K562 (cell line): ENCODE measurements at regions of chr19 and their contacts with region 1.

Region 1: DNA sequence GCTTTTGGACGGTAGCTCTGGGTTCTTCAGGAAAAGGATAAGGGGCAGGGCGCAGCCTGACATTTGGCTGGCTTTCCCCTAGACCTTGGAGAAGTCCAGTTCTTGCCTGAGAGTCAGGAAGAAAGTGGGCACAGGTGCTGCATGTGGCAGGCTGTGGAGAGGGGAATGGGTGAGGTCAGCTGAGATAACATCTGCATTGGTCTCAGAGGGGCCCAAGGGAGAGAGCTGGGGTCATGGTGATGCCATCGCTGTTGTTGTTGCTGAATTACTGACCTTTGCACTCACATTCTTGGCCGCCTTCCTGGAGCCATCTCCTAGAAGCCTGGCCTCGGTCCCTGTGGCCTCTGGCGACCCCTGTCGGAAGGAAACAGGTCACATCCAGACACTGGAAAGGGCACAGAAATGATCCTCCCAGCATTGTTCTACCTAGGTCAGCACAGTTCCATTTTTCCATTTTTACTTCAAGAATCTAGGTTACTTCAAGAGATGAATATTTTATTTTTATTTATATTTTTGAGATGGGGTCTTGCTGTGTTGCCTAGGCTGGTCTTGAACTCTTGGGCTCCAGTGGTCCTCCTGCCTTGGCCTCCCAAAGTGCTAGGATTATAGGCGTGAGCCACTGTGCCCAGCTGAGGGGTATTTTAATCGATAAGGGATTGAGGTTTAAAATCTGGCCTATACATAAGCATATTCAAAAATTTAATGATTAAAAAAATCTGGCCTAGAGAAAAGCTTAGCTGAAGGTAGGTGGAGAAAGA is 6.5 kb upstream of the LIPE start:
- DNase-seq: peak; percentile 61 to 88 (median 71)
- ATAC-seq: peak; percentile 98
- H3K4me3 ChIP-seq: no peak overlapping the region
- H3K27ac ChIP-seq: no peak overlapping the region
- H3K4me1 ChIP-seq: peaks cover 0 to 9% of the 10 kb centered on the region in 2 experiments; a peak in 2 of 5 replicates
- H3K27me3 ChIP-seq: no peaks in the 10 kb centered on the region
- CTCF ChIP-seq: peak; percentile 94 to 98 (median 95)
- EP300 ChIP-seq: no peak
- POLR2A ChIP-seq: no peak
- RAD21 ChIP-seq: peak; percentile 80 to 94

Region 2: GRCh38 chr19:42325273-42325895 is 108.3 kb before region 1 on chr19 and contains the start of gene MEGF8:
- CTCF ChIA-PET with region 1: no interaction called
- POLR2A ChIA-PET with region 1: no interaction called
- in situ Hi-C with region 1: no loop called
- intact Hi-C with region 1: loop called (anchors 10 kb)
- DNase-seq: peak; percentile 97 to 99 (median 98)
- ATAC-seq: peak; percentile 98
- H3K4me3 ChIP-seq: peak within 1 kb of the TSS; percentile 99
- H3K27ac ChIP-seq: peak within 1 kb of the TSS; percentile 72
- H3K4me1 ChIP-seq: peaks cover 8 to 27% of the 10 kb centered on the region in 2 experiments; a peak in 4 of 5 replicates
- H3K27me3 ChIP-seq: no peaks in the 10 kb centered on the region
- CTCF ChIP-seq: peak; percentile 91 to 96 (median 94)
- EP300 ChIP-seq: no peak
- POLR2A ChIP-seq: peak; percentile 79
- RAD21 ChIP-seq: peak; percentile 73 to 82
- polyA plus RNA-seq, gene MEGF8: 0.28 to 0.34 TPM

Region 3: DNA sequence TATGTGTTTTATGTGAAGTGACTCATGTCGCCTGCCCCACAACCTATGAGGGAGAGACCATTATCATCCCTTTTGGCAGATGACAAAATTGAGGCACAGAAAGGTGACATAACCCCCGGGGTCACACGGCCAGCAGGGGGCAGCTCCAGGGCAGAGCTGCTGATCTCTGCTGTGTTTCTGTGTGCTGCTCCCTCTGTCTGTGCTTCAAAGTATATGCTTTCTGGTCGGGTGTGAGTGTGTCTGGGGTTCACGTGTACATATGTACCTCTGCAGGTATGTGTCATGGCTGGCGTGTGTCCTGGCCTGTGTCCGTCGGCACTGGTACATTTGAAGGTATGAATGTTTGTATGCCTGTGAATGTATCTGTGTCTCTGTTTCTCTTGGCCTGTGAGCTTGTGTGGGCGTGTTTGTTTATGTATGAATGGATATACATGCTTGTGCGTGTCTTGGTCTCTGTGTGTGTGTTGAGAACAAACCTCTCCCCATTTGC is 13.6 kb before region 1 on chr19:
- CTCF ChIA-PET with region 1: interaction called, 6 read pairs
- POLR2A ChIA-PET with region 1: no interaction called
- in situ Hi-C with region 1: no loop called
- intact Hi-C with region 1: loop called (anchors 1 kb)
- DNase-seq: peak; percentile 82 to 90 (median 89)
- ATAC-seq: peak; percentile 96
- H3K4me3 ChIP-seq: no peak overlapping the region
- H3K27ac ChIP-seq: no peak overlapping the region
- H3K4me1 ChIP-seq: peaks cover 0 to 25% of the 10 kb centered on the region in 2 experiments; a peak in 2 of 5 replicates
- H3K27me3 ChIP-seq: peaks cover 0 to 4% of the 10 kb centered on the region in 2 experiments; a peak in 1 of 5 replicates
- CTCF ChIP-seq: peak; percentile 97 to 100 (median 99)
- EP300 ChIP-seq: no peak
- POLR2A ChIP-seq: no peak
- RAD21 ChIP-seq: peak; percentile 24 to 75; a peak in 2 of 4 replicates

Region 4: DNA sequence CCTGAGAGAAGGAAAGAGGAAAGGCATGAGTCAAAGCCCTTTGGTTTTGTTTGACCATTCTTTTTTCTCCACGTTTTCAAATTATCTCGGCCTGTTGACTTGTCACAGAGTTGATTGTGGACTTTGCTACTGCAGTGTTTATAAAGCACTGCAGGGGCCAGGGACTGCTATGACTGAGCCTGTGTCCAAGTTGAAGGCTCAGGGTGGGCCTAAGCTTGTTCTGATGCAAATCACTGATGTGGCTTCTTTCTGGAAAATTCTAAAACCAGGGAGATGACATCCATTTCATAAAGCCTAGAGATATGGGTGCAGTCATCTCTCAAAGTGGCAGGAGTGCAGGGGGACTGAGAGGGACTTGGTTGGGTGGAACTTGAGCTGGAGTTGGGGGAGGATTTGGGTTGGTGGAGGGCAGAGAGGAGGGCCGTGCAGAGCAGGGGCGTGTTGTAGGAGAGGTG is 10.3 kb after region 1 on chr19:
- CTCF ChIA-PET with region 1: no interaction called
- POLR2A ChIA-PET with region 1: no interaction called
- in situ Hi-C with region 1: no loop called
- intact Hi-C with region 1: no loop called
- DNase-seq: no peak
- ATAC-seq: no peak
- H3K4me3 ChIP-seq: no peak overlapping the region
- H3K27ac ChIP-seq: no peak overlapping the region
- H3K4me1 ChIP-seq: no peaks in the 10 kb centered on the region; a peak in 1 of 5 replicates
- H3K27me3 ChIP-seq: no peaks in the 10 kb centered on the region; a peak in 1 of 5 replicates
- CTCF ChIP-seq: no peak
- EP300 ChIP-seq: no peak
- POLR2A ChIP-seq: no peak
- RAD21 ChIP-seq: no peak

Region 5: GRCh38 chr19:42606660-42607351 is 173.1 kb after region 1 on chr19:
- CTCF ChIA-PET with region 1: no interaction called
- POLR2A ChIA-PET with region 1: no interaction called
- in situ Hi-C with region 1: no loop called
- intact Hi-C with region 1: no loop called
- DNase-seq: peak; percentile 69 to 76 (median 72)
- ATAC-seq: peak; percentile 93
- H3K4me3 ChIP-seq: no peak overlapping the region
- H3K27ac ChIP-seq: no peak overlapping the region
- H3K4me1 ChIP-seq: peaks cover 0 to 3% of the 10 kb centered on the region in 2 experiments; a peak in 1 of 5 replicates
- H3K27me3 ChIP-seq: no peaks in the 10 kb centered on the region; a peak in 2 of 5 replicates
- CTCF ChIP-seq: peak; percentile 80 to 88 (median 82)
- EP300 ChIP-seq: no peak
- POLR2A ChIP-seq: no peak
- RAD21 ChIP-seq: peak in 1 of 2 experiments; percentile 50; a peak in 2 of 4 replicates